ENCODE measurements at regions of chr3 and their contacts with region 1.

Region 1: GRCh38 chr3:57826245-57826951 is 70.3 kb downstream of the SLMAP start:
- DNase-seq: no peak
- H3K4me3 Mint-ChIP-seq: no peak overlapping the region
- H3K27ac Mint-ChIP-seq: peak overlapping the region; percentile 40
- H3K4me1 Mint-ChIP-seq: peaks cover 18% of the 10 kb centered on the region
- H3K27me3 Mint-ChIP-seq: no peaks in the 10 kb centered on the region
- CTCF ChIP-seq: peak; percentile 49

Region 2: GRCh38 chr3:57646723-57647122 is 179.7 kb before region 1 on chr3:
- CTCF ChIA-PET with region 1: interaction called, 9 read pairs
- POLR2A ChIA-PET with region 1: interaction called, 4 read pairs
- intact Hi-C with region 1: loop called (anchors 1 kb)
- DNase-seq: peak; percentile 36
- H3K4me3 Mint-ChIP-seq: no peak overlapping the region
- H3K27ac Mint-ChIP-seq: peak overlapping the region; percentile 80
- H3K4me1 Mint-ChIP-seq: peaks cover 10% of the 10 kb centered on the region
- H3K27me3 Mint-ChIP-seq: no peaks in the 10 kb centered on the region
- CTCF ChIP-seq: peak; percentile 23

Region 3: DNA sequence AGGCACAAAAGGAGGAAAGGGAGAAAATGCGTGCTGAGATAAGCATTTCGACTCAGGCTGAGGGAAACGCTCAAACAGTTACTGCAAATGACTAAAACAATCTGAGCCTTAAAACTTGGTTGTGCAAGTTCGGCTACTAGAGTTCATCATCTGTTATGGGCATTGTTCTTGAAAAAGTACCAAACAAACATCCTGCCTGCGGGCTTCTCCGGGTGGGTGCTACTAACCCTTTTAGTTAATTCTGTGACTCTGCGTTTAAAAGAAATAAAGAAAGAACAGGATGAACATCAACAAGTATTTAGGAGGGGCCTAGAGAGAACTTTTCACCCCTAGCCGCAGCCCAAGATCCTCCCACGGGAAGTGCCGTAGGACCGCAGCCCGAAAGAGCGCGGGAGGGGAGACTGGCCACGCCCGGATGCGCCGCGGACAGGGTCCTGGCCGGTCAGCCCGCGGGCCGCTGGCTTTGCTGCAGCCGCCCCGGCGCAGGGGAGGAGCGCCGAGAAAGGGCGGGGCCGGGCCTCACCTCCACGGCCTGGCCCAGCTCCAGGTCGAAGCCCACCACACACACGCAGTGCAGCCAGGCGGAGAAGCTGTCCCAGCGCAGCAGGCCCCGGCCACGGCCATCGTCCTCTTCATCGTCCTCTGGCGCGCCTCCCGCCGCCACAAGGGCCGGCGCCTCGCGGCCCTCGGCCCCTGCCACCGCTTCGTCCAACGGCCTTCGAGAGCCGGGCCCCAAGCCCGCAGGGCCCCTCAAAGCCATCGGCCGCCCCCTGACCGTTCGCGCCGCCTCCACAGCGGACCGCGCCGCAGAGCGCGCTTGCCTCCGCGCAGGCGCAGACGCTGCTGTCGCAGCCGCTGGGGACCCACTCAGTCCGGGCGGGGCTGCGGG is 133.9 kb before region 1 on chr3 and contains the start of gene DENND6A:
- CTCF ChIA-PET with region 1: interaction called, 6 read pairs
- POLR2A ChIA-PET with region 1: interaction called, 9 read pairs
- intact Hi-C with region 1: loop called (anchors 1 kb)
- DNase-seq: peak; percentile 91
- H3K4me3 Mint-ChIP-seq: peak within 1 kb of the TSS; percentile 80
- H3K27ac Mint-ChIP-seq: peak within 1 kb of the TSS; percentile 71
- H3K4me1 Mint-ChIP-seq: peaks cover 25% of the 10 kb centered on the region
- H3K27me3 Mint-ChIP-seq: no peaks in the 10 kb centered on the region
- CTCF ChIP-seq: no peak
- total RNA-seq, gene DENND6A: 21.2 and 22.3 TPM in 2 replicates

Region 4: DNA sequence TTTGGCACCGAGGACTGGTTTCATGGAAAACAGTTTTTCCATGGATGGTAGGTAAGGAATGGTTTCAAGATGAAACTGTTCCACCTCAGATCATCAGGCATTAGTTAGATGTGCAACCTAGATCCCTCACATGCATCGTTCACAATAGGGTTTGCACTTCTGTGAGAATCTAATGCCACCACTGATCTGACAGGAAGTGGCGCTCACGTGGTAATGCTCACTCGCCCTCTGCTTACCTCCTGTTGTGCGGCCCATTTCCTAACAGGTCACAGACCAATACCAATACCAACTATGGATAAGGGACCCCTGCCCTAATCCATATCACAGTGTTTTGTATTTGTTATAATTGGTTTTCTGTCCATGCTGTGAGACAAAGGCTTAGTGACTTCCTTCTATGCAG is 11.4 kb before region 1 on chr3:
- CTCF ChIA-PET with region 1: interaction called, 13 read pairs
- POLR2A ChIA-PET with region 1: interaction called, 3 read pairs
- intact Hi-C with region 1: no loop called
- DNase-seq: no peak
- H3K4me3 Mint-ChIP-seq: no peak overlapping the region
- H3K27ac Mint-ChIP-seq: no peak overlapping the region
- H3K4me1 Mint-ChIP-seq: peaks cover 15% of the 10 kb centered on the region
- H3K27me3 Mint-ChIP-seq: no peaks in the 10 kb centered on the region
- CTCF ChIP-seq: no peak

Region 5: DNA sequence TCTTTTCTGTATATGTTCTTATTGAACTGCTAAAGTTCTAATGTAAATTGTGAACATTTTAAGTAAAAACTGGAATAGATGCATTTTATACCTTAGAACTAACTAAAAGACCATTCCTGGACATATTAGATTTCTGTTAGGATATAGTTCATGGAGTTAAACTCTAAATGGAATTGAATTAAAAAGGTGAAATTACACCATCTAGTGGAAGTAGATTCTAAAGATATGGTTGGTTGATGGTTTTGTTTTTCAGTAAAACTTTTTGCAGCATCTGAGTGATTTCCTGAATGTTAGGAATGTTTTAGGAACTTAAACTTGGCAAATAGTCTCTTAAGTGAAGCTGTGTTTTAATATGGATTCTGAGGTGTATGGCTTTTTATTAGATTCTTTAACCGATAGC is 26.5 kb after region 1 on chr3:
- CTCF ChIA-PET with region 1: interaction called, 11 read pairs
- POLR2A ChIA-PET with region 1: interaction called, 3 read pairs
- intact Hi-C with region 1: no loop called
- DNase-seq: peak; percentile 25
- H3K4me3 Mint-ChIP-seq: no peak overlapping the region
- H3K27ac Mint-ChIP-seq: no peak overlapping the region
- H3K4me1 Mint-ChIP-seq: peaks cover 6% of the 10 kb centered on the region
- H3K27me3 Mint-ChIP-seq: no peaks in the 10 kb centered on the region
- CTCF ChIP-seq: peak; percentile 24